ENCODE measurements at regions of chr10 and their contacts with region 1.

Region 1: GRCh38 chr10:63629363-63630084 is 108.3 kb downstream of the REEP3 start:
- DNase-seq: peak; percentile 61 to 87 (median 75)
- ATAC-seq: peak; percentile 62
- H3K4me3 ChIP-seq: peak overlapping the region; percentile 77
- H3K4me3 Mint-ChIP-seq: peak overlapping the region; percentile 95
- H3K27ac ChIP-seq: peak overlapping the region; percentile 28 to 43
- H3K27ac Mint-ChIP-seq: peak overlapping the region; percentile 77
- H3K4me1 ChIP-seq: peaks cover 23% of the 10 kb centered on the region
- H3K4me1 Mint-ChIP-seq: peaks cover 23% of the 10 kb centered on the region
- H3K27me3 ChIP-seq: no peaks in the 10 kb centered on the region
- H3K27me3 Mint-ChIP-seq: no peaks in the 10 kb centered on the region
- CTCF ChIP-seq: peak; percentile 97

Region 2: DNA sequence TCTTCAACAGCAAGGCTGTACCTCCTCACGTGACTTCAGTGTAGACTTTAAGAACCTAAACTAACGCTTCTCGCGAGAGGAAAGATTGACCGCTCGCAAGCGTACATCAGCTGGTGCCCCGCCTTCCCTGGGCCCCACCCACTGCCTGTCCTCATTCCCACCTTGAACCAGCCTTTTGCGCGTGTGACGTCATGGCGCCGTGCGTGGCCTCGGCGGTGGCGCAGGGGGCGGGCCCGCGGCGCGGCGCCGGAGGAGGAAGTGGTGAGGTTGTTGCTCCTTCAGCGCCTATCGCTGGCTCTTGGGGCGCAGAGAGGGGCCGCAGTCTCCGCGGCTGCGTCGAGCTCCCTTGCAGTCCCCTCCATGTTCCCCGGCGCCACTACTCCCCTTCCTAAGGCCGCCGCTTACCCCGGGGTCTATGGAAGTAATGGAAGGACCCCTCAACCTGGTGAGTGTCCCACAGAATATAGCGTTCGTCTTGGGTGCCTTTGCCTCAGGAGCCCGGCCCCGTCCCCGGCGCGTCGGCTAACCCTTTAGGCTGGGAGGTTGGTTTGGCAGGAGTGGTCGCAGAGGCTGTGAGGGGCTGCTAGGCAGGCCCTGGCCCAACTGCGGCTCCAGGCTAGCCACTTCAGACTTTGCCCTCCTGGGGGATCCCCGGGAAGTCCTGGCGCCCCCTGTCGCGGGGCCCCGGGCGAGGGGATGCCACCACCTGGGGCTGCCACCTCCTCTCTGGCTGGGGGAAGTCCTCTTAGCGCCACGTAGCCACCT is 496.3 kb before region 1 on chr10 and contains the start of gene NRBF2:
- CTCF ChIA-PET with region 1: interaction called, 4 read pairs
- POLR2A ChIA-PET with region 1: interaction called, 10 read pairs
- intact Hi-C with region 1: no loop called
- DNase-seq: peak; percentile 91 to 99 (median 95)
- ATAC-seq: peak; percentile 90
- H3K4me3 ChIP-seq: peak within 1 kb of the TSS; percentile 89
- H3K4me3 Mint-ChIP-seq: peak within 1 kb of the TSS; percentile 94
- H3K27ac ChIP-seq: peak within 1 kb of the TSS; percentile 97 to 98
- H3K27ac Mint-ChIP-seq: peak within 1 kb of the TSS; percentile 88
- H3K4me1 ChIP-seq: peaks cover 44% of the 10 kb centered on the region
- H3K4me1 Mint-ChIP-seq: peaks cover 45% of the 10 kb centered on the region
- H3K27me3 ChIP-seq: no peaks in the 10 kb centered on the region
- H3K27me3 Mint-ChIP-seq: peaks cover 9% of the 10 kb centered on the region
- CTCF ChIP-seq: peak; percentile 22
- total RNA-seq, gene NRBF2: 25.3 to 25.6 TPM

Region 3: DNA sequence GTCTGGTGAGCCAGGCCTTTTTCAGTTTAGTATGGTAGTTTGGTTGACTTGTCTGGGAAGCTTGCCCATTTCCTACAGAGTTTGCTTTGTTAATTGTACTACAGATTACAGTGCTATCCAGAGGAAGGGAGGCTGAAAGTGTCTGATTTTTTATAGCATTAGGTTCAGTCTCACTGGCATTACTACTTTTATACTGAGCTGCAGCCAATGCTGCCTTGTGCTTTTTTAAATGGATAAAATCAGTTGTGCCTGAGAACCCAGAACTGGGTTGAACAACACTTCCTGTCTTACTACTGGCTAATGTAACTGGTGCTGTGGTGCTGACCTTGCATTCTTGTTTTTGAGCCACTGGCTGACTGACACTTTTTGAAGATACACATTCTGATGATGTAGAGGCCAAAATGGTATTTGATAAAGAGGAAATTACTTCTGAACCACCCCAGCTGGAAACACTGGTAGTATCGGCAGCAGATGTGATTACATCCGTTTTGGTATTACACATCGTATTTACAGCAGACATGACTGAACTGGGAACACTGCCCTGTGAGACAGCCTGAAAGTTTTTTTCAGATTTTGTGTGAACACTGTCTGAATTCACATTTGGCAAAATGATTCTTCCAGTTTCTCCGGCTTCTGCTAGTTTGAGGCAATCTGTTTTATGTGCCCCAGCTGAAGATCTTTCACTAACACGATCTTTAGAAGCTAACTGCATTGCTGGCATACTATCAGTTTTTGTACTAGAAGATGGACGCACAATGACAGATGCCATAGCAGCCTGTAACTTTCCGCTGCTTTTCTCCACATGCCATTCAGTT is 422.3 kb before region 1 on chr10:
- CTCF ChIA-PET with region 1: interaction called, 8 read pairs
- POLR2A ChIA-PET with region 1: interaction called, 11 read pairs
- intact Hi-C with region 1: no loop called
- DNase-seq: peak in 3 of 14 experiments; percentile 18 to 40 (median 27)
- ATAC-seq: no peak
- H3K4me3 ChIP-seq: no peak overlapping the region
- H3K4me3 Mint-ChIP-seq: peak overlapping the region; percentile 40
- H3K27ac ChIP-seq: no peak overlapping the region
- H3K27ac Mint-ChIP-seq: peak overlapping the region; percentile 31
- H3K4me1 ChIP-seq: peaks cover 12% of the 10 kb centered on the region
- H3K4me1 Mint-ChIP-seq: peaks cover 63% of the 10 kb centered on the region
- H3K27me3 ChIP-seq: no peaks in the 10 kb centered on the region
- H3K27me3 Mint-ChIP-seq: no peaks in the 10 kb centered on the region
- CTCF ChIP-seq: no peak

Region 4: GRCh38 chr10:63268798-63269503 is 360.6 kb before region 1 on chr10:
- CTCF ChIA-PET with region 1: interaction called, 7 read pairs
- POLR2A ChIA-PET with region 1: interaction called, 52 read pairs
- intact Hi-C with region 1: loop called (anchors 2 to 5 kb)
- DNase-seq: peak; percentile 60 to 96 (median 70)
- ATAC-seq: peak; percentile 88
- H3K4me3 ChIP-seq: peak overlapping the region; percentile 83
- H3K4me3 Mint-ChIP-seq: peak overlapping the region; percentile 98
- H3K27ac ChIP-seq: peak overlapping the region; percentile 82 to 94
- H3K27ac Mint-ChIP-seq: peak overlapping the region; percentile 98
- H3K4me1 ChIP-seq: peaks cover 5% of the 10 kb centered on the region
- H3K4me1 Mint-ChIP-seq: peaks cover 28% of the 10 kb centered on the region
- H3K27me3 ChIP-seq: no peaks in the 10 kb centered on the region
- H3K27me3 Mint-ChIP-seq: no peaks in the 10 kb centered on the region
- CTCF ChIP-seq: peak; percentile 14

Region 5: GRCh38 chr10:63478564-63478963 is 151.0 kb before region 1 on chr10:
- CTCF ChIA-PET with region 1: no interaction called
- POLR2A ChIA-PET with region 1: no interaction called
- intact Hi-C with region 1: loop called in 1 of 2 experiments (anchors 10 kb)
- DNase-seq: no peak
- ATAC-seq: no peak
- H3K4me3 ChIP-seq: no peak overlapping the region
- H3K4me3 Mint-ChIP-seq: no peak overlapping the region
- H3K27ac ChIP-seq: no peak overlapping the region
- H3K27ac Mint-ChIP-seq: no peak overlapping the region
- H3K4me1 ChIP-seq: peaks cover 4% of the 10 kb centered on the region
- H3K4me1 Mint-ChIP-seq: peaks cover 46% of the 10 kb centered on the region
- H3K27me3 ChIP-seq: no peaks in the 10 kb centered on the region
- H3K27me3 Mint-ChIP-seq: no peaks in the 10 kb centered on the region
- CTCF ChIP-seq: no peak

Region 6: DNA sequence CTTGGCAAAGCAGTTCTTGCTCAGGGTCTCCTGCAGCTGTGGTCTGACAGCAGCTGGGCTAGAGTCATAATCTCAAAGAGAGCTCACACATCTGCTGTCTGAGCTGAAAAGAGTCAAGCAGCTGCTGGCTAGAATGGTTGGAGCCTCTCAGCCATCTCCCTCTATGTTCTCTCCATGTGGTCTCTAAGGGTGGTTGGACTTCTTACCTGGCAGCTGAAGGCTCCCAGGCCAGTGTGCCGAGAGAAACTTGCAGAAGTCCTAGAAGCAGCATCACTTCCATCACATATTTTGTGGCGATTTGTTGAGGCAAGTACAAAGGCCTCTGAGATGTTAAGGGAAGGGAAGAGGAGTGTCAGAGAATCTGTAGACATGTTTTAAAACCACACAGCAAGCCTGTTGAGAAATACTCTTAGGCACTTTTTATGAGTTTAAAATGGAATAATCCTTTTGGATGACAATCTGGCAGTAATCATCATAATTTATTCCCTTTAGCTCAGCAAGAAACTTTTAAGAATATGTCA is 15.1 kb before region 1 on chr10:
- CTCF ChIA-PET with region 1: interaction called, 10 read pairs
- POLR2A ChIA-PET with region 1: interaction called, 3 read pairs
- intact Hi-C with region 1: no loop called
- DNase-seq: no peak
- ATAC-seq: no peak
- H3K4me3 ChIP-seq: no peak overlapping the region
- H3K4me3 Mint-ChIP-seq: no peak overlapping the region
- H3K27ac ChIP-seq: no peak overlapping the region
- H3K27ac Mint-ChIP-seq: no peak overlapping the region
- H3K4me1 ChIP-seq: no peaks in the 10 kb centered on the region
- H3K4me1 Mint-ChIP-seq: no peaks in the 10 kb centered on the region
- H3K27me3 ChIP-seq: no peaks in the 10 kb centered on the region
- H3K27me3 Mint-ChIP-seq: no peaks in the 10 kb centered on the region
- CTCF ChIP-seq: no peak

Region 7: DNA sequence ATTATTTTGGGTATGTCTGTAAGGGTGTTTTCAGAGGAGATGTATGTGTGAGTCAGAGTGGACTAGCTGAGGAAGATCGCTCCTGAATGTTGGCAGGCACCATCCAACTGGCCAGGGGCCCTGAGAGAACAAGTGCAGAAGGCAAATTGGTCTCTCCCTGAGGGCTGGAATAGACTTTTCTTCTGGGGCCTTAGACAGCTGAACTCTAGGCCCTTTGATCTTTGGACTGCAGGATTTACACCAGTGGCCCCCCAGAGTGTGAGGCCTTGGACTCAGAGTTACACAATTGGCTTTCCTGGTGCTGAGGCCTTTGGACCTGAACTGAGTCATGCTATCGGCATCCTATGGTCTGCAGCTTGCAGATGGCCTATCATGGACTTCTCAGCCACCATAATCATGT is 108.9 kb after region 1 on chr10:
- CTCF ChIA-PET with region 1: no interaction called
- POLR2A ChIA-PET with region 1: no interaction called
- intact Hi-C with region 1: no loop called
- DNase-seq: no peak
- ATAC-seq: no peak
- H3K4me3 ChIP-seq: no peak overlapping the region
- H3K4me3 Mint-ChIP-seq: no peak overlapping the region
- H3K27ac ChIP-seq: no peak overlapping the region
- H3K27ac Mint-ChIP-seq: no peak overlapping the region
- H3K4me1 ChIP-seq: no peaks in the 10 kb centered on the region
- H3K4me1 Mint-ChIP-seq: no peaks in the 10 kb centered on the region
- H3K27me3 ChIP-seq: peaks cover 0 to 3% of the 10 kb centered on the region in 2 experiments
- H3K27me3 Mint-ChIP-seq: peaks cover 5% of the 10 kb centered on the region
- CTCF ChIP-seq: no peak